ENCODE measurements at regions of chr1 and their contacts with region 1.

Region 1: GRCh38 chr1:93061895-93062792 is 16.9 kb upstream of the MTF2 start:
- DNase-seq: peak in 26 of 35 experiments; percentile 7 to 71 (median 22)
- ATAC-seq: peak; percentile 54 to 86 (median 70)
- H3K4me3 ChIP-seq: no peak overlapping the region
- H3K4me3 Mint-ChIP-seq: no peak overlapping the region
- H3K27ac ChIP-seq: no peak overlapping the region
- H3K27ac Mint-ChIP-seq: no peak overlapping the region
- H3K4me1 ChIP-seq: no peaks in the 10 kb centered on the region
- H3K4me1 Mint-ChIP-seq: peaks cover 0 to 4% (median 0%) of the 10 kb centered on the region in 3 donors
- H3K27me3 ChIP-seq: peaks cover 0 to 3% of the 10 kb centered on the region in 2 experiments
- H3K27me3 Mint-ChIP-seq: peaks cover 6 to 22% of the 10 kb centered on the region in 2 donors

Region 2: DNA sequence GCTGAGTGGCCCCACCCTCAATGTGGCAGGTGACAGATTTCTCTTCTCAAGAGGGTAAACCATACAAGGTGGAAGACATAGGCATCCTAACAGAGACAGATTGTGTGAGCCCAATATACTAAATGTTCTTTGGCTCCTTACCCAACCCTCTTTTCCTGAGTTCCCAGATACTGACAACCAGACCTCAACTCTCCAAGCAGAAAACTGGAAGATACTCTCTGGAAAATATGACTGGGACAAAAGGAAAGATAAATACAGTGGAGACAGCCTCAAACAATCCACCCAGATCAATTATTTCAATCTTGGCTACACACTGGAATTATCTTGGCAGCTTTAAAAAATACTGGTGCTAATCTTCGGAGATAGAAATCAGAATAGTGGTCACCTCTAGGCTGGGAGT is 283.8 kb before region 1 on chr1:
- CTCF ChIA-PET with region 1: no interaction called
- POLR2A ChIA-PET with region 1: no interaction called
- DNase-seq: no peak
- ATAC-seq: no peak
- H3K4me3 ChIP-seq: no peak overlapping the region
- H3K4me3 Mint-ChIP-seq: no peak overlapping the region
- H3K27ac ChIP-seq: no peak overlapping the region
- H3K27ac Mint-ChIP-seq: peak overlapping the region in 1 of 2 donors; percentile 11
- H3K4me1 ChIP-seq: peaks cover 0 to 7% of the 10 kb centered on the region in 2 experiments
- H3K4me1 Mint-ChIP-seq: peaks cover 5 to 7% (median 6%) of the 10 kb centered on the region in 3 donors
- H3K27me3 ChIP-seq: peaks cover 2 to 32% of the 10 kb centered on the region in 2 experiments
- H3K27me3 Mint-ChIP-seq: peaks cover 34 to 37% of the 10 kb centered on the region in 2 donors

Region 3: GRCh38 chr1:93021539-93022134 is 40.5 kb before region 1 on chr1:
- CTCF ChIA-PET with region 1: interaction called, 20 to 27 read pairs
- POLR2A ChIA-PET with region 1: no interaction called
- DNase-seq: peak in 3 of 35 experiments; percentile 7 to 69 (median 24)
- ATAC-seq: peak; percentile 55 to 77 (median 68)
- H3K4me3 ChIP-seq: no peak overlapping the region
- H3K4me3 Mint-ChIP-seq: no peak overlapping the region
- H3K27ac ChIP-seq: no peak overlapping the region
- H3K27ac Mint-ChIP-seq: no peak overlapping the region
- H3K4me1 ChIP-seq: no peaks in the 10 kb centered on the region
- H3K4me1 Mint-ChIP-seq: peaks cover 0 to 5% (median 0%) of the 10 kb centered on the region in 3 donors
- H3K27me3 ChIP-seq: no peaks in the 10 kb centered on the region
- H3K27me3 Mint-ChIP-seq: peaks cover 0 to 10% of the 10 kb centered on the region in 2 donors

Region 4: GRCh38 chr1:93108335-93108734 is 46.2 kb after region 1 on chr1:
- CTCF ChIA-PET with region 1: interaction called in 1 of 2 experiments, 12 read pairs
- POLR2A ChIA-PET with region 1: no interaction called
- DNase-seq: no peak
- ATAC-seq: no peak
- H3K4me3 ChIP-seq: no peak overlapping the region
- H3K4me3 Mint-ChIP-seq: no peak overlapping the region
- H3K27ac ChIP-seq: no peak overlapping the region
- H3K27ac Mint-ChIP-seq: no peak overlapping the region
- H3K4me1 ChIP-seq: no peaks in the 10 kb centered on the region
- H3K4me1 Mint-ChIP-seq: peaks cover 33 to 40% (median 40%) of the 10 kb centered on the region in 3 donors
- H3K27me3 ChIP-seq: no peaks in the 10 kb centered on the region
- H3K27me3 Mint-ChIP-seq: no peaks in the 10 kb centered on the region